ENCODE measurements at regions of chr17 and their contacts with region 1.

Region 1: DNA sequence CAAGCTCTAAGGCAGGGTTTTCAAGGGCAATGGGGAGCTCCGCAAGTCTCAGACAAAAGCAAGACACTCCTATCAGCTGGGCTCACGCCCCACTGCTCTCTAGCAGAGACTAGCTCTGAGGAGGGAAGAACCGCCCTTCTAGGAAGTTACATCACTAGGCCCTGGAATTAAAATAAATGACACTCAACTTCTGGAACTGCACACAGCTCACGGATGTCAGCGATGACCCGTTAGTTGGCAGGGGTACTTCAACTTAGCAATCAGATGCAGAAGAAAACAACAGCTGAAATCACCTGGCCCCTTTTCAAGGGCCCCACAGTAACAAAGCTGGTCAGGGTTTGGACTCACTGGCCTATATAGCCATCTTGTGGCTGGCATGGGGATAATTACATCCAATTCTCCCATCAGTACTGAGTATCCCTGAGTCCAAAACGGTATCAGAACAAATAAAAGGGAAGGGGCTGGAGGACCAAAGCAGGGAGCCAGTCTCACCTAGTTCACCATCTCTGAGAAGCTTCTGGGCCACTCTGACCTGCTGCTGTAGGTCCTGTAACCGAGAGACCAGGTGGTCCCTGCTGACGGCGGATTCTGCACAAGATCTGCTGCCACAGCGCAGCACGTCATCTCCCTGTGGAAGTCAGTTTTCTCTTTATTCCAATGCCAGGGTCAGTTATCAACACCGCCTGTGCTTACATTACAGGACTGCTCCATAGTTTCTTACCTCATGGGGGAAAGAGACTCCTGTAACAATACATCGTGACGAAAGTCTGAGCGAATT is 22.2 kb downstream of the SERPINF1 start:
- DNase-seq: peak; percentile 83
- ATAC-seq: peak; percentile 87
- H3K4me3 ChIP-seq: peak overlapping the region in 2 of 5 experiments; percentile 15 to 22
- H3K4me3 Mint-ChIP-seq: peak overlapping the region; percentile 80
- H3K27ac ChIP-seq: peak overlapping the region; percentile 92 to 97
- H3K27ac Mint-ChIP-seq: peak overlapping the region; percentile 98
- H3K4me1 ChIP-seq: peaks cover 27 to 30% of the 10 kb centered on the region in 2 donors
- H3K4me1 Mint-ChIP-seq: peaks cover 28% of the 10 kb centered on the region
- H3K27me3 ChIP-seq: no peaks in the 10 kb centered on the region
- H3K27me3 Mint-ChIP-seq: no peaks in the 10 kb centered on the region
- CTCF ChIP-seq: peak; percentile 73

Region 2: DNA sequence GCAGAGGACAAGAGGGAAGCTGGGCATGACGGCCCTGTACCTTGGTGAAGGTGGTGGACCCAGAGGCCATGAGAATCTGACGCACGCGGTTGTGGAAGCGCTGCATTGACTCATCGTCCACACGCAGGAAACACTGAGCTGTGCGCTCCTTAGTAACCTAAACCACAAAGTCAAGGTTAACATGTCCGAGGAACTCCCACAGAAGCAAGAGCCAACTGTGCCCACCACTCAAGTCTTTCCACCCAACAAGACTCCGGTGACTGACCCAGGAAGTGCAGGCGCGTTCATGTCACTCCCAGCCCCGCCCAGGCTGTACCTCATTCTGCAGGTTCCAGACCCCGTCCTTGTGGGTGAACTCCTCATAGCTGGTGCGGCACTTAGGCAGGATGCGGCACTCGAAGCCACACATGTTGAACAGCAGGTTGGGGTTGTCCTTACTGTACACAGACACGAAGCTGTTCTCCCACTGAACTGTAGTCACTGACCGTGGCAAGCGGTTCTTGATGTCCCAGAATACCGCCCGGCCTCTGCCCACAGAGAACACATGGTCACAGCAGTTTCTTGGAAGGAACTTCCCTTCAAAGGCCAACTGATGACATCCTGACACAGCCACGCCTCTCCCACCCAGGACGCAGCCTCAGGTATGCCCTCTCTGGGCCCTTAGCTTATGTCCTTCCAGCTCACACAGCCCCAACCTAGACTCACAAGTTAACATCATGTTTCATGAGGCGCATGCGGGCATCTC is 110.8 kb before region 1 on chr17:
- CTCF ChIA-PET with region 1: interaction called, 57 read pairs
- POLR2A ChIA-PET with region 1: no interaction called
- intact Hi-C with region 1: loop called (anchors 1 kb)
- DNase-seq: no peak
- ATAC-seq: no peak
- H3K4me3 ChIP-seq: no peak overlapping the region
- H3K4me3 Mint-ChIP-seq: no peak overlapping the region
- H3K27ac ChIP-seq: no peak overlapping the region
- H3K27ac Mint-ChIP-seq: no peak overlapping the region
- H3K4me1 ChIP-seq: no peaks in the 10 kb centered on the region
- H3K4me1 Mint-ChIP-seq: peaks cover 7% of the 10 kb centered on the region
- H3K27me3 ChIP-seq: no peaks in the 10 kb centered on the region
- H3K27me3 Mint-ChIP-seq: no peaks in the 10 kb centered on the region
- CTCF ChIP-seq: no peak

Region 3: DNA sequence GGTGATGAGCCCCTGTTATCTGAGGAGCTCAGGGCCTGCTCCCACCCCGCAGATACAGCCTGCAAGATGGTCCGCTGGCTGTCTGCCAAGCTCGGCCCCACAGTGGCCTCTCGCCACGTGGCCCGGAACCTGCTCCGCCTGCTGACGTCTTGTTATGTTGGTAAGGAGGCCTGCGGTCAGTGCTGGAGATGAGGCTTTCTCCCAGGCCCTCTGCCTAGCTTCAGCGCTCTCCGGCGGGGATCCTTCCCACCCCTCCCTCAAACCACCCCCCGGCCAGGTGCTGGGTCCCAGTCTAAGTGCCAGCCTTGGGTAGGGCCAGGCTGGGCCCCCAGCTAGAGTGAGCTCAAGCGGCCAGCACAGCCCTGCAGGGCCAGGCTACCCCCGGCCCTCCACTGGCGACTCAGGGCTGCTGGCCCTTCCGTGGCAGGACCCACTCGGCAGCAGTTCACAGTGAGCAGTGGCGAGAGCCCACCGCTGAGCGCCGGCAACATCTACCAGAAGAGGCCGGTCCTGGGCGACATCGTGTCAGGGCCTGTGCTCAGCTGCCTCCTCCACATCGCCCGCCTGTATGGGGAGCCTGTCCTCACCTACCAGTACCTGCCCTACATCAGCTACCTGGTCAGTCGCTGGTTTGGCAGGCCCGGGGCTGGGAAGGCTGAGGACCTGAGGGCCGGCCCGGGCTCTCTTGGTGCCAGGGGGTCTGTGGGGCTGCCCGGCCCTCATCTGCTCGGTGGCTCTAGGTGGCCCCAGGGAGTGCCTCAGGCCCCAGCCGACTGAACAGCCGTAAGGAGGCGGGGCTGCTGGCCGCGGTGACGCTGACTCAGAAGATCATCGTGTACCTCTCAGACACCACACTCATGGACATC is 53.5 kb before region 1 on chr17:
- CTCF ChIA-PET with region 1: interaction called, 397 read pairs
- POLR2A ChIA-PET with region 1: interaction called, 27 read pairs
- intact Hi-C with region 1: no loop called
- DNase-seq: no peak
- ATAC-seq: no peak
- H3K4me3 ChIP-seq: no peak overlapping the region
- H3K4me3 Mint-ChIP-seq: no peak overlapping the region
- H3K27ac ChIP-seq: no peak overlapping the region
- H3K27ac Mint-ChIP-seq: peak overlapping the region; percentile 50
- H3K4me1 ChIP-seq: peaks cover 17 to 43% of the 10 kb centered on the region in 2 donors
- H3K4me1 Mint-ChIP-seq: peaks cover 53% of the 10 kb centered on the region
- H3K27me3 ChIP-seq: no peaks in the 10 kb centered on the region
- H3K27me3 Mint-ChIP-seq: no peaks in the 10 kb centered on the region
- CTCF ChIP-seq: no peak

Region 4: GRCh38 chr17:1764284-1764683 is 19.7 kb before region 1 on chr17:
- CTCF ChIA-PET with region 1: interaction called, 69 read pairs
- POLR2A ChIA-PET with region 1: interaction called, 48 read pairs
- intact Hi-C with region 1: loop called (anchors 2 kb)
- DNase-seq: peak; percentile 69
- ATAC-seq: peak; percentile 95
- H3K4me3 ChIP-seq: peak overlapping the region in 1 of 5 experiments; percentile 36
- H3K4me3 Mint-ChIP-seq: peak overlapping the region; percentile 65
- H3K27ac ChIP-seq: peak overlapping the region; percentile 33 to 39
- H3K27ac Mint-ChIP-seq: peak overlapping the region; percentile 89
- H3K4me1 ChIP-seq: peaks cover 24 to 52% of the 10 kb centered on the region in 2 donors
- H3K4me1 Mint-ChIP-seq: peaks cover 38% of the 10 kb centered on the region
- H3K27me3 ChIP-seq: no peaks in the 10 kb centered on the region
- H3K27me3 Mint-ChIP-seq: no peaks in the 10 kb centered on the region
- CTCF ChIP-seq: no peak

Region 5: GRCh38 chr17:1829592-1830257 is 45.7 kb after region 1 on chr17 and contains the starts of genes RPA1 and SMYD4:
- CTCF ChIA-PET with region 1: no interaction called
- POLR2A ChIA-PET with region 1: interaction called, 3 read pairs
- intact Hi-C with region 1: loop called (anchors 1 kb)
- DNase-seq: peak; percentile 91
- ATAC-seq: peak; percentile 97
- H3K4me3 ChIP-seq: peak within 1 kb of the TSS; percentile 64 to 87 (median 76)
- H3K4me3 Mint-ChIP-seq: peak within 1 kb of the TSS; percentile 94
- H3K27ac ChIP-seq: peak within 1 kb of the TSS; percentile 60 to 74
- H3K27ac Mint-ChIP-seq: peak within 1 kb of the TSS; percentile 89
- H3K4me1 ChIP-seq: peaks cover 13 to 30% of the 10 kb centered on the region in 2 donors
- H3K4me1 Mint-ChIP-seq: peaks cover 45% of the 10 kb centered on the region
- H3K27me3 ChIP-seq: no peaks in the 10 kb centered on the region
- H3K27me3 Mint-ChIP-seq: no peaks in the 10 kb centered on the region
- CTCF ChIP-seq: no peak
- total RNA-seq, gene RPA1: 74.2 and 94.5 TPM in 2 replicates
- total RNA-seq, gene SMYD4: 37.5 and 42.3 TPM in 2 replicates

Region 6: DNA sequence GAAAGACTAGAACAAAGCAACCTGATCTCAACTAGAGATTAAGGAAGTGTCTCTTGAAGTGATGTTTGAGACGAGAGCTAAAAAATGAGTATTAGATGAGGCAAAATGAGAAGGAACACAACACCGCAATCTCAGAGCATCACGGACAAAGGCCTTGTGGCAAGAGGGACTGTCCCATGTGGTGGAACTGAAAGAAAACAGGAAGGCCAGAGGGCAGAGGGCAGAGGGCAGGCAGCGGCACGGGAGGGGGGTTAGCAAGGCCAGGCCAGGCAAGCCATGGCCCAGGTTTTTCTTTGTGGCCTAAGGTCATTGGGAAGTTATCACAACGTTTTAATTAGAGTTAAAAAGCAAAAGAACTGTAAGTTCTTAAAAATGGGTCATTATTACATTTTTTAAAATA is 68.3 kb after region 1 on chr17:
- CTCF ChIA-PET with region 1: no interaction called
- POLR2A ChIA-PET with region 1: no interaction called
- intact Hi-C with region 1: no loop called
- DNase-seq: no peak
- ATAC-seq: no peak
- H3K4me3 ChIP-seq: no peak overlapping the region
- H3K4me3 Mint-ChIP-seq: no peak overlapping the region
- H3K27ac ChIP-seq: peak overlapping the region in 1 of 2 donors; percentile 6
- H3K27ac Mint-ChIP-seq: peak overlapping the region; percentile 57
- H3K4me1 ChIP-seq: no peaks in the 10 kb centered on the region
- H3K4me1 Mint-ChIP-seq: peaks cover 6% of the 10 kb centered on the region
- H3K27me3 ChIP-seq: no peaks in the 10 kb centered on the region
- H3K27me3 Mint-ChIP-seq: no peaks in the 10 kb centered on the region
- CTCF ChIP-seq: no peak

Region 7: GRCh38 chr17:1875597-1875996 is 91.6 kb after region 1 on chr17:
- CTCF ChIA-PET with region 1: no interaction called
- POLR2A ChIA-PET with region 1: no interaction called
- intact Hi-C with region 1: no loop called
- DNase-seq: no peak
- ATAC-seq: no peak
- H3K4me3 ChIP-seq: no peak overlapping the region
- H3K4me3 Mint-ChIP-seq: no peak overlapping the region
- H3K27ac ChIP-seq: no peak overlapping the region
- H3K27ac Mint-ChIP-seq: no peak overlapping the region
- H3K4me1 ChIP-seq: no peaks in the 10 kb centered on the region
- H3K4me1 Mint-ChIP-seq: no peaks in the 10 kb centered on the region
- H3K27me3 ChIP-seq: no peaks in the 10 kb centered on the region
- H3K27me3 Mint-ChIP-seq: no peaks in the 10 kb centered on the region
- CTCF ChIP-seq: no peak